ENCODE measurements at regions of chr7 and their contacts with region 1.

Region 1: DNA sequence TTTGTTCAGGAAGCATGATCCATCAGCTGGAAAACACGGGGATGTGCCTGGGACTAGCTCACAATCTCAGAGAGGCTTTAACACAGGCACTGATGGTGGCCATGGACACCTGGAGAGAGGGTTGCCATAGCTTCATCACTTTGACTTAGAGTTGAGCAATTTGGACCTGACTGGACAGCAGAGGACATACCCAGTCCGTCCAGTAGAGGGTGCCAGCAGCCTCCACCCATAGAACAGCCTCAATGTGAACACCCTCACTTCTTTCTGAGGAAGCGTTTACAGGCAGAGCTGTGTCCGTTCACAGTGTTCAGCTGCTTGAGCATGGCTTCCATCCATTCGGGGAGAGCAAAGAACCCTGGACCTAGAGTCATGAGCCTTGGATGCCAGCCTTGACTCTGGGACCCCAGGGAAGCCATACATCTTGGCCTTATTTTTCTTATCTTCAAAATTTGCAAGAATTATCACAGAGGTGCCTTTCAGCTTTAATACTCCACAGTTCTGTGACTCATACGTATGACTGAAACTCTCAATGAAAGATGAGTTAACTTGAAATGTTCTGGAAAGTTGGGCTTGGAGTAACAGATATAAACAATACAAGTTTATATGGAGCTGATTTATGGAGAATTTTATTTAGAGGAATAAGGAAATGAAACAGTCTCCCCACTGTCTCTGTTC is 302.9 kb upstream of the PODXL start:
- DNase-seq: peak; percentile 26
- H3K4me3 ChIP-seq: no peak overlapping the region
- CTCF ChIP-seq: peak; percentile 94

Region 2: GRCh38 chr7:131409129-131409766 is 450.0 kb before region 1 on chr7:
- CTCF ChIA-PET with region 1: no interaction called
- POLR2A ChIA-PET with region 1: no interaction called
- DNase-seq: no peak
- H3K4me3 ChIP-seq: no peak overlapping the region
- CTCF ChIP-seq: no peak

Region 3: DNA sequence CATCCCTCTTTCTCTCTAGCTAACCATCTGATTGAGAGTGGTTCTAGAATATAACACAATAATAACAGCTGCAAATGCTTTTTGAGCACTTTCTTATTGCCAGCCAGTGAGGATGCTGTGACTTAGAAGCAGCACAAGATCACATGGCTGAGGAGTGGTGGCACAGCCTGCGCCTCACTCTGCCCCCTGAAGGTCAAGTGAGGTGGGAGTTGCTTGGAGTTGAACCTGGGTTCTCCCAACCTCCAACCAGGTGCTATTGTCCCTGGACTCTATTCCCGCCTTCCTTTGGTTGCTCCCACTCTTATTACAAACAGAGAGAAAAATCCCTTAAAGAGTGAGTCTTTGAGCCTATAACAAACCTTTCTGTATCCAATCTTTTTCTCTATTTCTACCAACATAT is 22.6 kb before region 1 on chr7:
- CTCF ChIA-PET with region 1: interaction called, 12 read pairs
- POLR2A ChIA-PET with region 1: no interaction called
- DNase-seq: no peak
- H3K4me3 ChIP-seq: no peak overlapping the region
- CTCF ChIP-seq: no peak

Region 4: DNA sequence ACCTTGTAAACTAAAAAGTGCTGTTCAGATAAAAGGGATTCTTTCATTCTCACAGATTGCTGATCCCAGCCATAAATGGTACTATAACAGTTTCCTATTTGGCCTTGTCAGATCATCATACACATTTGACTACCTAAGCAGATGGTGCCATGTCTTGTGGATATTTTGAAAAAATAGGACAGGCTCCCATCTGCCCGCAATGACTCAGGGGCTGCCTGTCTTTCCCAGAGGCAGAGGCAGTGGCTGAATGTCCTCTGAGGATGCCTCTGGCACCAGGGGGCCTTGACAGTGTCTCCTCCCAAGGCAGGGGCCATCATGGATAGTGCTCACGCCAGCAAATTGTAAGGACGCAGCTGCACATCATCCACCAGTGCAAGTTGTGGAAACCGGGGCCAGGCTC is 20.1 kb after region 1 on chr7:
- CTCF ChIA-PET with region 1: interaction called, 34 read pairs
- POLR2A ChIA-PET with region 1: no interaction called
- DNase-seq: no peak
- H3K4me3 ChIP-seq: no peak overlapping the region
- CTCF ChIP-seq: no peak

Region 5: DNA sequence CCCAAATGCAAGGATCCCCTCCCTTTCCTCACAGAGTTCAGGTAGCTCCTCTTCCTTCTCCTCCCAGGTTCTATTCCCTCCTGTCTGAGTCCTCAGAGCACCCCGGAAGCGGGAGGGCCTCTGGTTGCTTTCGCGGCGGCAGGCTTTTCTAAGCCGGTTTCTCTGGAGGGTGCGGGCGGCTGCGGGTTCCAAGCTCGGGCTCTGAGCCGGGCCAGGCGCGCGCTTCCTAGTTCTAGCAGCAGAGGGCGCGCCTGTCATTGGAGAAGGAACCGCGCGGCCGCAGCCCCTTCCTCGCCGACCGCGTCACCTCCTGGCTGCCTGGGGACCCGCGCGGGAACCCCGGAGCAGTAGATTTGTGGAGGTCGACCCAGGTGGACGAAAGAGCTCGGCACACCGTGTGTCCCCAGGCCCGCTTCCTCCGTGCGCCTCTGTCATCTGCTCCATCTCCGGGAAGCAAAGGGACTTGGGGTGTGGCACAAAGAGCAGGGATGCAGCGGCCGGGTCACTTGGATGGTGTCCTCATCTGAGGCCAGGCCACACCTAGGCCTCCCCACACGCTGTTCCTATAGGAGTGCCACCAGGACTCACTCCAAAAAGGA is 86.1 kb after region 1 on chr7:
- CTCF ChIA-PET with region 1: interaction called, 37 read pairs
- POLR2A ChIA-PET with region 1: no interaction called
- DNase-seq: no peak
- H3K4me3 ChIP-seq: peak overlapping the region; percentile 32
- CTCF ChIP-seq: peak; percentile 93

Region 6: DNA sequence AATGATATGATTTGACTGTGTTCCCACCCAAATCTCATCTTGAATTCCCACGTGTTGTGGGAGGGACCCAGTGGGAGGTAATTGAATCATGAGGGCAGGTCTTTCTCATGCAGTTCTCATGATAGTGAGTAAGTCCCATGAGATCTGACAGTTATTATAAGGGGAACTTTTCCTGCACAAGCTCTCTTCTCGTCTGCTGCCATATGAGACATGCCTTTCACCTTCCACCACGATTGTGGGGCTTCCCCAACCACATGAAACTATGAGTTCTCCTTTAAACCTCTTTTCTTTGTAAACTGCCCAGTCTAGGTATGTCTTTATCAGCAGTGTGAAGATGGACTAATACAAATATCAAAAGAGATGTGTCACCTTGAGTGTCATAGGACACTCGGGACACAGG is 199.9 kb after region 1 on chr7:
- CTCF ChIA-PET with region 1: interaction called, 12 read pairs
- POLR2A ChIA-PET with region 1: no interaction called
- DNase-seq: no peak
- H3K4me3 ChIP-seq: no peak overlapping the region
- CTCF ChIP-seq: no peak

Region 7: GRCh38 chr7:132130497-132130896 is 271.2 kb after region 1 on chr7:
- CTCF ChIA-PET with region 1: no interaction called
- POLR2A ChIA-PET with region 1: no interaction called
- DNase-seq: no peak
- H3K4me3 ChIP-seq: no peak overlapping the region
- CTCF ChIP-seq: no peak

Region 8: DNA sequence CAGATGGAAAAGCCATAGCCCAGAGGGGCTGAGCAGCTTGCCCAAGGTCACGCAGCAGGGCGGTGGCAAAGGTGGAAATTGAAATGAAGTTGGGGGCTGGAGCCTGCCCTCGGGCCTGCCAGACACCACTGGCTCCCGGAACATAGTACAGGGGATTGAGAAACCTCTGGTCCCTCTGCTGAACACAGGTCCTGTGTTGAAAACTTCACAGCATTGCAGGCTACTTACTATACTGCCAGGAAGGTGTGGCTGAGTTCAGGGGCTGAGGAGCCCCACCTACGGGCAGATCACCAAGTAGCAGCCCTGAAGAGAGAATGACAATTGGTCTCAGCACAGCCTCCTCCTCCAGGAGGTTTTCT is 390.3 kb after region 1 on chr7:
- CTCF ChIA-PET with region 1: interaction called, 82 read pairs
- POLR2A ChIA-PET with region 1: no interaction called
- DNase-seq: no peak
- H3K4me3 ChIP-seq: no peak overlapping the region
- CTCF ChIP-seq: peak; percentile 21

Region 9: GRCh38 chr7:132580717-132581285 is 721.5 kb after region 1 on chr7:
- CTCF ChIA-PET with region 1: interaction called, 118 read pairs
- POLR2A ChIA-PET with region 1: no interaction called
- DNase-seq: peak; percentile 21
- H3K4me3 ChIP-seq: no peak overlapping the region
- CTCF ChIP-seq: peak; percentile 81

Measured in AG04449 (cell line).